ENCODE measurements at regions of chr1 and their contacts with region 1.

Region 1: GRCh38 chr1:93629099-93630059 is 52.3 kb downstream of the BCAR3 start:
- DNase-seq: peak; percentile 61
- ATAC-seq: peak; percentile 60
- H3K4me3 Mint-ChIP-seq: no peak overlapping the region
- H3K27ac Mint-ChIP-seq: no peak overlapping the region
- H3K4me1 Mint-ChIP-seq: no peaks in the 10 kb centered on the region
- H3K27me3 Mint-ChIP-seq: peaks cover 6% of the 10 kb centered on the region

Region 2: GRCh38 chr1:93614986-93615581 is 14.3 kb before region 1 on chr1:
- CTCF ChIA-PET with region 1: interaction called, 12 read pairs
- POLR2A ChIA-PET with region 1: no interaction called
- DNase-seq: no peak
- ATAC-seq: no peak
- H3K4me3 Mint-ChIP-seq: no peak overlapping the region
- H3K27ac Mint-ChIP-seq: no peak overlapping the region
- H3K4me1 Mint-ChIP-seq: peaks cover 9% of the 10 kb centered on the region
- H3K27me3 Mint-ChIP-seq: peaks cover 2% of the 10 kb centered on the region

Region 3: GRCh38 chr1:93661829-93662474 is 32.6 kb after region 1 on chr1:
- CTCF ChIA-PET with region 1: no interaction called
- POLR2A ChIA-PET with region 1: no interaction called
- DNase-seq: no peak
- ATAC-seq: no peak
- H3K4me3 Mint-ChIP-seq: no peak overlapping the region
- H3K27ac Mint-ChIP-seq: no peak overlapping the region
- H3K4me1 Mint-ChIP-seq: no peaks in the 10 kb centered on the region
- H3K27me3 Mint-ChIP-seq: peaks cover 7% of the 10 kb centered on the region

Region 4: GRCh38 chr1:93749894-93750301 is 120.5 kb after region 1 on chr1:
- CTCF ChIA-PET with region 1: interaction called, 13 read pairs
- POLR2A ChIA-PET with region 1: no interaction called
- DNase-seq: no peak
- ATAC-seq: no peak
- H3K4me3 Mint-ChIP-seq: no peak overlapping the region
- H3K27ac Mint-ChIP-seq: peak overlapping the region; percentile 56
- H3K4me1 Mint-ChIP-seq: peaks cover 50% of the 10 kb centered on the region
- H3K27me3 Mint-ChIP-seq: no peaks in the 10 kb centered on the region

Region 5: GRCh38 chr1:93814059-93814794 is 184.8 kb after region 1 on chr1:
- CTCF ChIA-PET with region 1: interaction called, 273 read pairs
- POLR2A ChIA-PET with region 1: interaction called, 3 read pairs
- DNase-seq: peak; percentile 71
- ATAC-seq: peak; percentile 72
- H3K4me3 Mint-ChIP-seq: no peak overlapping the region
- H3K27ac Mint-ChIP-seq: no peak overlapping the region
- H3K4me1 Mint-ChIP-seq: peaks cover 19% of the 10 kb centered on the region
- H3K27me3 Mint-ChIP-seq: no peaks in the 10 kb centered on the region

Region 6: DNA sequence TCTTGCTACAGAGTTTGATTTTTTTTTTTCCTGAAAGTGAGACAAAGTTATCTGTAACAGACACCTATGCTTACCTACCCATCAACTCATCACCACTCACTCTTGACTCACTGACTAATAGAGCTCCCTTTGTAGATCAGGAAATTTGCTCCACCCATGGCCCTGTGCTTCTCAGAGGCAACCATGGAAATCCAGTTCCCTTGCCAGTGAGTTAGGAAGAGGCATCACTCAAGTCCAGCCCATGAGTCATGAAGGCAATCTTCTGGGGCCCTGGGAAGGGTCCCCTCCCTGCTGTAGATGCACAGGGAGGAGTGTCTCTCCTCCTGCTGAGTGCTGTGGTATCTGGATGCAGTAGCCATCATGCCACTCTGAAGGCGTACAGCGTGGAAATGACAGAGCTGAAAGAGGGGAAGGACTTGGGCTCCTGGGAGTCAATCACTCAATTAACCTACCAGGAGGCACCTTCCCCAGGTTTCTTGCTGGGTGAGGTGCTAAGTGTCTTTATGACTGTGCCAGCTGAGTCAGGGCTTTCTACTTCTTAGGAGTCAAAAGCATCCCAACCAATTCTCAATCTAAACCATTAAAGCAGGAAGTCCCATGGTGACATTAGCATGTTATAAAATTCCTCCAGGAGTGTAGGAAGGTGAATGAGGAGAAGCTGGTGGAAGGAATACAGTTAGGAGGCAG is 193.5 kb after region 1 on chr1:
- CTCF ChIA-PET with region 1: interaction called, 273 read pairs
- POLR2A ChIA-PET with region 1: no interaction called
- DNase-seq: no peak
- ATAC-seq: no peak
- H3K4me3 Mint-ChIP-seq: no peak overlapping the region
- H3K27ac Mint-ChIP-seq: no peak overlapping the region
- H3K4me1 Mint-ChIP-seq: peaks cover 22% of the 10 kb centered on the region
- H3K27me3 Mint-ChIP-seq: peaks cover 17% of the 10 kb centered on the region

Region 7: GRCh38 chr1:93839307-93839706 is 209.9 kb after region 1 on chr1:
- CTCF ChIA-PET with region 1: interaction called, 133 read pairs
- POLR2A ChIA-PET with region 1: no interaction called
- DNase-seq: no peak
- ATAC-seq: no peak
- H3K4me3 Mint-ChIP-seq: no peak overlapping the region
- H3K27ac Mint-ChIP-seq: no peak overlapping the region
- H3K4me1 Mint-ChIP-seq: peaks cover 2% of the 10 kb centered on the region
- H3K27me3 Mint-ChIP-seq: no peaks in the 10 kb centered on the region

Region 8: DNA sequence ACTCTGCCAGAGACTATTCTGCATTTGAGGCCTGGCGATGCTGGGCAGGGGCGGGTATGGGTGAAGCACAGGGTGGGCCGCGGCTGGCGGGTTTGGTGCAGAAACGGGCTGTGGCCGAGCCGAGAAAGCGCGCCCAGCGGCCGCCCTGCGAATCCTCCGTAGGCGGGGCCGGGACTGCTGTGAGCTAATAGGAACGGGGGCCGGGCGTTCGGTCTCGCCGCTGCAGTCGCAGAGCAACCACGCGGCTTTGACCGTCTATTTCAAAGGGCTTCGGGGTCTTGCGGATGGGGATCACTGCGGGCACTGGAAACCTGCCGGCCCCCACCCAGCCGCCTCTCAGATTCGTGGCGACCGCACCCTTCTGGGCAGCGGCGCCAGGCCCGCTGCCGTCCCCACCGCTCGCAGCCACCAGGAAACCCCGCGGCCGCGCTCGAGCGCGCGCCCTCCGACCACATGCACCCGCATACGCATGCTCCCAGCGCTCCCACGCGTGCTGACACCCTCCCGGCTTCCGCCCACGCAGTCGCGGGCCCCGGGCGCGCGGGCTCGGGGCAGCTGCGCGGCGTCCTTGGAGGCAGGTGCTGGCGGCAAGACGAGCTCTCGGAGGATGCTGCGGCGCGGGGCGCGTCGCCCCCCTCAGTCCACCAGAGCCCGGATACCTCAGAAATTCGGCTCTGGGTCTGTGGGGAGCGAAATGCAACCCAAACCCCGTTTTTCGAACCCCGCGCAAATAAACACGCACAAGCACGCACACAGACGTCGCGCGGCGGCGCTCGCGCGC is 217.0 kb after region 1 on chr1:
- CTCF ChIA-PET with region 1: interaction called, 133 read pairs
- POLR2A ChIA-PET with region 1: no interaction called
- DNase-seq: peak; percentile 88
- ATAC-seq: peak; percentile 58
- H3K4me3 Mint-ChIP-seq: peak overlapping the region; percentile 93
- H3K27ac Mint-ChIP-seq: peak overlapping the region; percentile 92
- H3K4me1 Mint-ChIP-seq: peaks cover 36% of the 10 kb centered on the region
- H3K27me3 Mint-ChIP-seq: peaks cover 9% of the 10 kb centered on the region